ENCODE measurements at regions of chr20 and their contacts with region 1.

Region 1: GRCh38 chr20:18904624-18905023 is 91.0 kb downstream of the SCP2D1 start:
- DNase-seq: no peak
- H3K4me3 ChIP-seq: no peak overlapping the region
- H3K27ac ChIP-seq: no peak overlapping the region
- H3K4me1 ChIP-seq: no peaks in the 10 kb centered on the region
- H3K27me3 ChIP-seq: no peaks in the 10 kb centered on the region
- CTCF ChIP-seq: peak; percentile 45 to 74

Region 2: DNA sequence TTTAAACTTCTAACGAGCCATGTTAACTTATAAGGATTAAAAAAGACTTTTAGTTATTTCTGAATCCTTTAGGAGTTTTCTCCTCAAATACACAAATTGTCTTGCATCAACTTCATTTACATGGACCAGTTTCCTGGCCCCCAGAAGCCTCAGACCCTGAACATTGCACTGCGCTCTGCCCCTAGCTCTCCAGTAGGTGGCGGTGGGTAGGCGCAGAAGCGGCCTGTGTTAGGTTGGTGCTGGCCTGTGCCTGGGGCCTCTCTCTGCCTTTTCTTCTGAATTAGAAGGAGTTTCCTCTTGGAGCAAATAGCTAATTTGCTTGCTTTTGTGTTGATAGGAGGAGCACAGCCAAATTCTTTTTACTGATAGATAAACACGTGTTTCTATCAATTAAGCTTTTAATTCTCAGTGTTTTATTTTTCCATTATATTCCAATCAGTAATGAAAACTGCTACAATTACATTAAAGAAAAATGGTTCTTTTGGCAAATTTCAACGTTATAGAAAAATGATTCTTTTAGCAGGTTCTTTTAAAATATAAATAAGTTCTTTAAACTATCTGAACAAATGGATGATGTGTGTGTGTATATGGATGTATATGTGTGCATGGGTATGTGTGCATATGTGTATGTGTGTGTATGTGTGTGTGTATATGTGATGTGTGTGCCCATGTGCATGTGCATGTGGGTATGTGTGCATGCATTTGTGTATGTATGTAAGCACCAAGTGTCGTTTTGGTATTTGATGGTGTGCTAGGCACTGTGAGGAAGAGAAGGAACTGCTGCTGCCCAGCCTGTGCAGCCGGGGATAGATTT is 272.2 kb before region 1 on chr20:
- CTCF ChIA-PET with region 1: no interaction called
- dilution Hi-C with region 1: no loop called
- in situ Hi-C with region 1: no loop called
- intact Hi-C with region 1: loop called (anchors 1 kb)
- DNase-seq: peak; percentile 20
- H3K4me3 ChIP-seq: no peak overlapping the region
- H3K27ac ChIP-seq: no peak overlapping the region
- H3K4me1 ChIP-seq: no peaks in the 10 kb centered on the region
- H3K27me3 ChIP-seq: no peaks in the 10 kb centered on the region
- CTCF ChIP-seq: peak; percentile 96 to 97

Region 3: GRCh38 chr20:18857640-18858039 is 47.0 kb before region 1 on chr20:
- CTCF ChIA-PET with region 1: no interaction called
- dilution Hi-C with region 1: no loop called
- in situ Hi-C with region 1: no loop called
- intact Hi-C with region 1: no loop called
- DNase-seq: peak; percentile 68
- H3K4me3 ChIP-seq: no peak overlapping the region
- H3K27ac ChIP-seq: peak overlapping the region; percentile 38
- H3K4me1 ChIP-seq: peaks cover 20% of the 10 kb centered on the region
- H3K27me3 ChIP-seq: no peaks in the 10 kb centered on the region
- CTCF ChIP-seq: no peak

Region 4: DNA sequence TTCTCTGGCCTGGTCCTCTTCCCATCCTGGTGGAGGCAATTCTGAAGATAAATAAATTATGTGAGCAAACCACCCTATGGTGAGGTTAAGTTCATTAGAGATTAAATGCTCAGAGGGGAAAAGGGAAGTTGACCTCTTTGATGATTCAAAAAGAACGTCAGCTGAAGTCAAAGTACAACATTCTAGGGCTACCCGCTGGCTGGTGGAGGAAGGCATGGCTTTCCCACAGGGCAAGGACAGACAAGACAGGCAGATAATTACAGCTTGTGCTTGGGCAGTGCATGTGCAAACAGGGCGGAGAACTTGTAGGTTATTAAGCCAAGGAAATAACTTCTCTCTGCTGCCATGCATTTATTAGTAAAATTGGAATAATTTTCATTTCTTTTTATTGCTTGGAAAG is 216.8 kb after region 1 on chr20:
- CTCF ChIA-PET with region 1: interaction called, 16 read pairs
- dilution Hi-C with region 1: no loop called
- in situ Hi-C with region 1: no loop called
- intact Hi-C with region 1: no loop called
- DNase-seq: no peak
- H3K4me3 ChIP-seq: no peak overlapping the region
- H3K27ac ChIP-seq: no peak overlapping the region
- H3K4me1 ChIP-seq: no peaks in the 10 kb centered on the region
- H3K27me3 ChIP-seq: no peaks in the 10 kb centered on the region
- CTCF ChIP-seq: no peak

Region 5: GRCh38 chr20:19205977-19206396 is 301.4 kb after region 1 on chr20:
- CTCF ChIA-PET with region 1: no interaction called
- dilution Hi-C with region 1: no loop called
- in situ Hi-C with region 1: no loop called
- intact Hi-C with region 1: loop called (anchors 5 kb)
- DNase-seq: peak; percentile 32
- H3K4me3 ChIP-seq: no peak overlapping the region
- H3K27ac ChIP-seq: no peak overlapping the region
- H3K4me1 ChIP-seq: no peaks in the 10 kb centered on the region
- H3K27me3 ChIP-seq: peaks cover 7% of the 10 kb centered on the region
- CTCF ChIP-seq: peak; percentile 81 to 89

Region 6: GRCh38 chr20:19661717-19662636 is 757.4 kb after region 1 on chr20:
- CTCF ChIA-PET with region 1: no interaction called
- dilution Hi-C with region 1: no loop called
- in situ Hi-C with region 1: loop called in 1 of 2 experiments (anchors 25 kb)
- intact Hi-C with region 1: loop called (anchors 1 kb)
- DNase-seq: peak; percentile 40
- H3K4me3 ChIP-seq: no peak overlapping the region
- H3K27ac ChIP-seq: no peak overlapping the region
- H3K4me1 ChIP-seq: no peaks in the 10 kb centered on the region
- H3K27me3 ChIP-seq: no peaks in the 10 kb centered on the region
- CTCF ChIP-seq: peak; percentile 99 to 100